ENCODE measurements at regions of chr13 and their contacts with region 1.

Region 1: DNA sequence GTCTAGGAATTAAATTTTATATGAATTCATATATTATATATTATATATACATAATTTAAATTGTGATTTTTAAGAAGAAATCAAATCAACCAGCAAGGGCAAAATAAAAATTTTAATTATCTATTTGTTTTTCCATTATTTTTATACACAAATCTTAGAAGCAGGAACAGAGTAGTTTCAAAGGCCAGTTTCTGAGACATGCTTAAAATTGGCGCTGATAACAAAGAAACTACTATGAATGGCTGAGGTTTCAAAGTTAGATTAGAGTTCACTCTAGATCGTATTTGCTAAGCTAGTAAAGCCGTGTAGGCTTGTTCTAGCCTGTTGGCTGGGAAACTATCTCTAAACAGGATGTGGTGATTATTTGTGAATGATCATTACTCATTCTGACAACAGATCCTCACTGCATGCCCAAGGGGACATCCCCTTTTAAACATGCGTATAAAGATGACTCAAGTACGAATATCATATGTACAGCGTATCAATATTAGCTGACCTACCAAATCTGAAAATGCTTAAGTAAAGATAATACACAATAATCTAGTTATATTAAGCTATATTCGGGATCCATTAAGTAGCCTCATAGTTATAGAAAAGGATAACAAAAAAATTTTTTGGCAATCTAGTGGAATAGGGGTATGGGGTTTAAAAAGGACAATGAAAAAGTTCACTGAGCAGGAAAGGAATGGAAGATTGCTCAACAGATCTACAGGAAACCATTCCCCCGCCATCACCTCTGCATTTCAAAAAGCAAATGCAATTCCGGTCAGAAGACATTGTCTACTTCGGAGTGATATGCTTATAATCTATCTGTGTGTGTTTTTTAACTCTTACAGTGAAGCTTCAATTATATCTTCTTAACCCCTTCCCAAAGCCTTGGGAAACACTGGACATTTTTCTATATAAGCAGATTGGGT is 150.1 kb downstream of the SHISA2 start:
- DNase-seq: peak in 7 of 9 donors; percentile 34 to 82 (median 72)
- ATAC-seq: peak; percentile 95
- H3K4me3 ChIP-seq: no peak overlapping the region
- H3K4me3 Mint-ChIP-seq: peak overlapping the region in 4 of 10 donors; percentile 1 to 9 (median 5)
- H3K27ac ChIP-seq: peak overlapping the region; percentile 24
- H3K27ac Mint-ChIP-seq: peak overlapping the region in 4 of 9 donors; percentile 12 to 67 (median 33)
- H3K4me1 ChIP-seq: peaks cover 15 to 66% of the 10 kb centered on the region in 2 donors
- H3K4me1 Mint-ChIP-seq: peaks cover 0 to 26% (median 25%) of the 10 kb centered on the region in 7 donors
- H3K27me3 ChIP-seq: no peaks in the 10 kb centered on the region
- H3K27me3 Mint-ChIP-seq: peaks cover 0 to 3% (median 0%) of the 10 kb centered on the region in 5 donors

Region 2: GRCh38 chr13:25762795-25763377 is 138.8 kb before region 1 on chr13:
- CTCF ChIA-PET with region 1: no interaction called
- POLR2A ChIA-PET with region 1: no interaction called
- intact Hi-C with region 1: loop called in 1 of 2 experiments (anchors 5 kb)
- DNase-seq: peak in 5 of 9 donors; percentile 8 to 32 (median 24)
- ATAC-seq: peak; percentile 55
- H3K4me3 ChIP-seq: no peak overlapping the region
- H3K4me3 Mint-ChIP-seq: peak overlapping the region in 9 of 10 donors; percentile 33 to 74 (median 63)
- H3K27ac ChIP-seq: no peak overlapping the region
- H3K27ac Mint-ChIP-seq: peak overlapping the region in 6 of 9 donors; percentile 6 to 76 (median 54)
- H3K4me1 ChIP-seq: peaks cover 0 to 7% of the 10 kb centered on the region in 2 donors
- H3K4me1 Mint-ChIP-seq: peaks cover 14 to 31% (median 20%) of the 10 kb centered on the region in 7 donors
- H3K27me3 ChIP-seq: no peaks in the 10 kb centered on the region
- H3K27me3 Mint-ChIP-seq: peaks cover 0 to 6% (median 0%) of the 10 kb centered on the region in 5 donors

Region 3: DNA sequence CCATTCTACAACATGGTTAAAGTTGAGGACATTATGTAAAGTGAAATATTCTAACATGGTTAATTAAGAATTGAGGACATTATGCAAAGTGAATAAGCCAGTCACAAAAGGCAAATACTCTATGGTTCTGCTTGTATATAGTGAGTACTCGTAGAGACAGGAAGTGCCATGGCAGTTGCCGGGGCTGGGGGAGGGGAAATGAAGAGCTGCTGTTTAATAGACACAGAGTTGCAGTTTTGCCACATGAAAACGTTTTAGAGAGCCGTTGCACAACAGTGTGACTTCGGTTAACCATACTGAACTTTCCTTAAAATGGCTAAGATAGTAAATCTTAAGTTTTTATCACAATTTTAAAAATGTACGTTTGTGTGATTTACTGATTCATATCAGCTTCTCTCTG is 26.8 kb before region 1 on chr13:
- CTCF ChIA-PET with region 1: interaction called, 4 read pairs
- POLR2A ChIA-PET with region 1: interaction called, 4 read pairs
- intact Hi-C with region 1: loop called (anchors 1 kb)
- DNase-seq: peak in 8 of 9 donors; percentile 24 to 84 (median 76)
- ATAC-seq: peak; percentile 90
- H3K4me3 ChIP-seq: peak overlapping the region; percentile 12
- H3K4me3 Mint-ChIP-seq: peak overlapping the region in 9 of 10 donors; percentile 14 to 71 (median 66)
- H3K27ac ChIP-seq: peak overlapping the region; percentile 55
- H3K27ac Mint-ChIP-seq: peak overlapping the region; percentile 57 to 94 (median 87)
- H3K4me1 ChIP-seq: peaks cover 15 to 44% of the 10 kb centered on the region in 2 donors
- H3K4me1 Mint-ChIP-seq: peaks cover 36 to 95% (median 79%) of the 10 kb centered on the region in 7 donors
- H3K27me3 ChIP-seq: no peaks in the 10 kb centered on the region
- H3K27me3 Mint-ChIP-seq: no peaks in the 10 kb centered on the region

Region 4: GRCh38 chr13:25951831-25952230 is 50.1 kb after region 1 on chr13:
- CTCF ChIA-PET with region 1: no interaction called
- POLR2A ChIA-PET with region 1: interaction called, 4 read pairs
- intact Hi-C with region 1: loop called (anchors 5 kb)
- DNase-seq: no peak
- ATAC-seq: no peak
- H3K4me3 ChIP-seq: no peak overlapping the region
- H3K4me3 Mint-ChIP-seq: no peak overlapping the region
- H3K27ac ChIP-seq: no peak overlapping the region
- H3K27ac Mint-ChIP-seq: no peak overlapping the region
- H3K4me1 ChIP-seq: peaks cover 7 to 11% of the 10 kb centered on the region in 2 donors
- H3K4me1 Mint-ChIP-seq: peaks cover 2 to 29% (median 16%) of the 10 kb centered on the region in 7 donors
- H3K27me3 ChIP-seq: no peaks in the 10 kb centered on the region
- H3K27me3 Mint-ChIP-seq: peaks cover 0 to 7% (median 0%) of the 10 kb centered on the region in 5 donors

Region 5: DNA sequence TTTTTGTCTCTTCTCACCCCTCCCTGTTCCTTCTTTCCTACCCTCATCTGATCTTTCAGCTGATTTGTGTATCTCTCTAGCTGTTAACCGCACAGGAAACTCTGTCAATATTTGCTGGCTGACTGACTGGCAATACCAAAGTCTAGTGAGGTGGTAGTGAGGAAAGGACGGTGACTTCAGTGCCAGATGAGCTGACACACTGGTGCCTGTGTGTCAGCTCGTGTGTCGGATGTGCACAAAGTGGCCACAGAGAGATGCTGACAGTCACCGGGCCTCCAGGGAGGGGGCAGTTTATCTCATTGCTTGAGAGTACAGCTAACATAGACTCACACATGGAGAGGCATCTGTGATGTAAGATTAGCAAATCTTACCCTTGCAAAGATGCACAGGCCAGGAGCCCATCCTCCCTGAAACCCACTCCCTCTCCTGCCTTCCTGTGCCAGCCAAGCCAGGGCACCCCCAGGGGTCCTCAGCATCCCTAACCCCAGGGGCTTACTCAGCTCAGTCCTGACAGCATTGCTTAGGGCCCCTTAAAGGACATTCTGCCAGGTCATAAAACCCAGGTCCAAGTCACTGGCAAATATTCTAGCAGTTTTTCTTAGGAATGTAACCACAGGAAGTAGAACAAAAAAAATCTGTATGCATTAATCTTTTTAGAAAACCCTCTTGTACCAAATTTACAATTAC is 69.9 kb after region 1 on chr13:
- CTCF ChIA-PET with region 1: no interaction called
- POLR2A ChIA-PET with region 1: interaction called, 6 read pairs
- intact Hi-C with region 1: loop called in 1 of 2 experiments (anchors 1 kb)
- DNase-seq: peak in 7 of 9 donors; percentile 14 to 58 (median 38)
- ATAC-seq: peak; percentile 83
- H3K4me3 ChIP-seq: no peak overlapping the region
- H3K4me3 Mint-ChIP-seq: peak overlapping the region in 9 of 10 donors; percentile 36 to 76 (median 66)
- H3K27ac ChIP-seq: peak overlapping the region; percentile 52
- H3K27ac Mint-ChIP-seq: peak overlapping the region; percentile 71 to 97 (median 84)
- H3K4me1 ChIP-seq: peaks cover 37 to 42% of the 10 kb centered on the region in 2 donors
- H3K4me1 Mint-ChIP-seq: peaks cover 33 to 77% (median 55%) of the 10 kb centered on the region in 7 donors
- H3K27me3 ChIP-seq: no peaks in the 10 kb centered on the region
- H3K27me3 Mint-ChIP-seq: no peaks in the 10 kb centered on the region

Region 6: GRCh38 chr13:26051657-26052311 is 150.1 kb after region 1 on chr13 and contains the start of gene SHISA2:
- CTCF ChIA-PET with region 1: no interaction called
- POLR2A ChIA-PET with region 1: interaction called, 3 read pairs
- intact Hi-C with region 1: loop called (anchors 1 to 2 kb)
- DNase-seq: peak; percentile 2 to 51 (median 31)
- ATAC-seq: peak; percentile 82
- H3K4me3 ChIP-seq: peak within 1 kb of the TSS; percentile 39
- H3K4me3 Mint-ChIP-seq: peak within 1 kb of the TSS; percentile 77 to 89 (median 83)
- H3K27ac ChIP-seq: peak within 1 kb of the TSS; percentile 13
- H3K27ac Mint-ChIP-seq: peak within 1 kb of the TSS in 4 of 9 donors; percentile 16 to 67 (median 60)
- H3K4me1 ChIP-seq: peaks cover 0 to 11% of the 10 kb centered on the region in 2 donors
- H3K4me1 Mint-ChIP-seq: peaks cover 0 to 37% (median 17%) of the 10 kb centered on the region in 7 donors
- H3K27me3 ChIP-seq: peaks cover 0 to 6% of the 10 kb centered on the region in 2 donors
- H3K27me3 Mint-ChIP-seq: peaks cover 0 to 71% (median 29%) of the 10 kb centered on the region in 5 donors
- total RNA-seq, gene SHISA2: 0.98 to 3.6 (median 1.6) TPM